AG04449 (cell line): ENCODE measurements at regions of chr11 and their contacts with region 1.

Region 1: GRCh38 chr11:62905927-62906531 is 15.1 kb downstream of the CHRM1 start:
- DNase-seq: no peak
- H3K4me3 ChIP-seq: no peak overlapping the region
- CTCF ChIP-seq: peak; percentile 98

Region 2: GRCh38 chr11:62922658-62923431 is 16.8 kb after region 1 on chr11:
- CTCF ChIA-PET with region 1: interaction called, 150 read pairs
- POLR2A ChIA-PET with region 1: no interaction called
- DNase-seq: no peak
- H3K4me3 ChIP-seq: no peak overlapping the region; the same call in 1 of the 2 replicates
- CTCF ChIP-seq: peak; percentile 53

Region 3: GRCh38 chr11:62974848-62975522 is 69.0 kb after region 1 on chr11:
- CTCF ChIA-PET with region 1: interaction called, 20 read pairs
- POLR2A ChIA-PET with region 1: no interaction called
- DNase-seq: no peak
- H3K4me3 ChIP-seq: no peak overlapping the region
- CTCF ChIP-seq: peak; percentile 14

Region 4: GRCh38 chr11:63015521-63016215 is 109.6 kb after region 1 on chr11 and contains the start of gene SLC22A8:
- CTCF ChIA-PET with region 1: interaction called, 669 read pairs
- POLR2A ChIA-PET with region 1: no interaction called
- DNase-seq: no peak
- H3K4me3 ChIP-seq: no peak within 1 kb of the TSS
- CTCF ChIP-seq: no peak

Region 5: DNA sequence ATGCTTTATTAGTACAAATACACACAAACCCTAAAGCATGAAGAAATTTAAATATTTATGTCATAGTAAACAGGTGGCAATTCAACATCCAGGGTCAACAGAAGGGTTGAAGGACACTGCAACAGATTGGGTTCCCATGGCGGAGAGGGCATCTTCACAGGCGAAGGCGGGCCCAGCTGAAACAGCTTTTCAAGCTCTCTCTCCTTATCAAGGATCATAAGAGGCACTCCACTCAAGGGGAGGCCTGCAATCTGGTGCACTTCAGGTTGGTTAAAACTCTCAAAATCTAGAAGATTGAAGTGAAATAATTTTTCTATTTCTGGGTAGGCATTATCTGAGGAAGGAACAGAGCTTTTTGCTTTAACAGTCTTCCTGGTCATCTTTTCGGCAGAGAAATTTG is 126.4 kb after region 1 on chr11:
- CTCF ChIA-PET with region 1: interaction called, 242 read pairs
- POLR2A ChIA-PET with region 1: no interaction called
- DNase-seq: no peak
- H3K4me3 ChIP-seq: no peak overlapping the region
- CTCF ChIP-seq: no peak